Gastrocnemius medialis (tissue), 4 donors: ENCODE measurements at regions of chr11 and their contacts with region 1.

Region 1: GRCh38 chr11:65888163-65888814 is at the start of gene FIBP:
- DNase-seq: peak; percentile 97 to 98
- ATAC-seq: peak; percentile 68
- H3K4me3 ChIP-seq: peak within 1 kb of the TSS; percentile 66 to 86 (median 78)
- H3K27ac ChIP-seq: peak within 1 kb of the TSS; percentile 93 to 98 (median 96)
- H3K4me1 ChIP-seq: peaks cover 41 to 45% of the 10 kb centered on the region in 2 donors
- H3K27me3 ChIP-seq: no peaks in the 10 kb centered on the region
- CTCF ChIP-seq: peak; percentile 85 to 95 (median 93)
- POLR2A ChIP-seq: peak; percentile 80 to 92
- total RNA-seq, gene FIBP: 39.6 to 79.3 (median 53.0) TPM

Region 2: GRCh38 chr11:65873318-65874156 is 14.8 kb before region 1 on chr11:
- in situ Hi-C with region 1: no loop called
- intact Hi-C with region 1: loop called (anchors 1 kb)
- DNase-seq: peak; percentile 85 to 91
- ATAC-seq: peak; percentile 84 to 89
- H3K4me3 ChIP-seq: peak overlapping the region; percentile 54 to 63 (median 60)
- H3K27ac ChIP-seq: peak overlapping the region; percentile 80 to 87 (median 82)
- H3K4me1 ChIP-seq: peaks cover 0 to 19% of the 10 kb centered on the region in 2 donors
- H3K27me3 ChIP-seq: no peaks in the 10 kb centered on the region
- CTCF ChIP-seq: no peak
- POLR2A ChIP-seq: peak; percentile 76 to 82

Region 3: DNA sequence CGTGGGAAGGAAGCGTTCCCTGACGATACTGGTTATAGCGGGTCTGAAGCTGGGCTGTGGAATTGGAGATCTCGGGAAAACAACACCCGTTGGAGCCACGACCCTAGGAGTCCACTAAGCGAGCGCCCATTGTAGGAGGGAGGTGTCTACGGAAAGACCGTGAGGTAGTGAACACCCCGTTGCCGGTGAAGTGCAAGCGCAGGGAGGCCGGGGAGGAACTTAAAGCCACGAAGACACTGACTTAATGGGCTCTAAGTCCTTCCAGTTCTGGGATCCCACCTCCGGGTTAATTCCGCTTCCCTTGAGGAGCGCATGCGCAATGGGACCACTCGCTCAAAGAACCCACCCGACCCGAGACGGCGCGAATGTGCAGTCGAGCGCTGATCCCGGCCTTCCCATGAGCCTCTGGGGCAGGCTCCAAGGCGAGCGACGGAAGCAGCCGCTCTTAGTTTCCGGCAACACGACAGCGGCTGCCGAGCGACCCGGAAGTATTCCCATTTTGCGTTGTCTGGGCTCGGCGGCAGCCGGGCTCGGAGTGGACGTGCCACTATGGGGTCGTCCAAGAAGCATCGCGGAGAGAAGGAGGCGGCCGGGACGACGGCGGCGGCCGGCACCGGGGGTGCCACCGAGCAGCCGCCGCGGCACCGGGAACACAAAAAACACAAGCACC is 73.1 kb after region 1 on chr11 and contains the start of gene SART1:
- in situ Hi-C with region 1: loop called in 1 of 4 experiments (anchors 10 kb)
- intact Hi-C with region 1: loop called (anchors 1 kb)
- DNase-seq: peak; percentile 97 to 98
- ATAC-seq: peak; percentile 97 to 98
- H3K4me3 ChIP-seq: peak within 1 kb of the TSS; percentile 69 to 100 (median 88)
- H3K27ac ChIP-seq: peak within 1 kb of the TSS; percentile 81 to 96 (median 90)
- H3K4me1 ChIP-seq: peaks cover 16 to 24% of the 10 kb centered on the region in 2 donors
- H3K27me3 ChIP-seq: no peaks in the 10 kb centered on the region
- CTCF ChIP-seq: peak in 1 of 5 experiments; percentile 14
- POLR2A ChIP-seq: peak; percentile 61 to 81
- total RNA-seq, gene SART1: 12.0 to 55.2 (median 33.3) TPM